CD8-positive, alpha-beta memory T cell (primary cell): ENCODE measurements at regions of chr14 and their contacts with region 1.

Region 1: GRCh38 chr14:99896384-99896783 is 103.2 kb downstream of the EML1 start:
- DNase-seq: no peak
- H3K4me3 ChIP-seq: no peak overlapping the region
- H3K4me3 Mint-ChIP-seq: no peak overlapping the region
- H3K27ac ChIP-seq: no peak overlapping the region
- H3K27ac Mint-ChIP-seq: no peak overlapping the region
- H3K4me1 ChIP-seq: no peaks in the 10 kb centered on the region
- H3K4me1 Mint-ChIP-seq: no peaks in the 10 kb centered on the region
- H3K27me3 ChIP-seq: no peaks in the 10 kb centered on the region
- H3K27me3 Mint-ChIP-seq: peaks cover 6 to 13% of the 10 kb centered on the region in 2 donors

Region 2: GRCh38 chr14:99884834-99885648 is 11.3 kb before region 1 on chr14:
- CTCF ChIA-PET with region 1: interaction called, 11 read pairs
- POLR2A ChIA-PET with region 1: no interaction called
- DNase-seq: peak in 2 of 5 donors; percentile 47 to 50
- H3K4me3 ChIP-seq: no peak overlapping the region
- H3K4me3 Mint-ChIP-seq: no peak overlapping the region
- H3K27ac ChIP-seq: no peak overlapping the region
- H3K27ac Mint-ChIP-seq: no peak overlapping the region
- H3K4me1 ChIP-seq: no peaks in the 10 kb centered on the region
- H3K4me1 Mint-ChIP-seq: no peaks in the 10 kb centered on the region
- H3K27me3 ChIP-seq: no peaks in the 10 kb centered on the region
- H3K27me3 Mint-ChIP-seq: peaks cover 7 to 8% of the 10 kb centered on the region in 2 donors